ENCODE measurements at regions of chr16 and their contacts with region 1.

Region 1: DNA sequence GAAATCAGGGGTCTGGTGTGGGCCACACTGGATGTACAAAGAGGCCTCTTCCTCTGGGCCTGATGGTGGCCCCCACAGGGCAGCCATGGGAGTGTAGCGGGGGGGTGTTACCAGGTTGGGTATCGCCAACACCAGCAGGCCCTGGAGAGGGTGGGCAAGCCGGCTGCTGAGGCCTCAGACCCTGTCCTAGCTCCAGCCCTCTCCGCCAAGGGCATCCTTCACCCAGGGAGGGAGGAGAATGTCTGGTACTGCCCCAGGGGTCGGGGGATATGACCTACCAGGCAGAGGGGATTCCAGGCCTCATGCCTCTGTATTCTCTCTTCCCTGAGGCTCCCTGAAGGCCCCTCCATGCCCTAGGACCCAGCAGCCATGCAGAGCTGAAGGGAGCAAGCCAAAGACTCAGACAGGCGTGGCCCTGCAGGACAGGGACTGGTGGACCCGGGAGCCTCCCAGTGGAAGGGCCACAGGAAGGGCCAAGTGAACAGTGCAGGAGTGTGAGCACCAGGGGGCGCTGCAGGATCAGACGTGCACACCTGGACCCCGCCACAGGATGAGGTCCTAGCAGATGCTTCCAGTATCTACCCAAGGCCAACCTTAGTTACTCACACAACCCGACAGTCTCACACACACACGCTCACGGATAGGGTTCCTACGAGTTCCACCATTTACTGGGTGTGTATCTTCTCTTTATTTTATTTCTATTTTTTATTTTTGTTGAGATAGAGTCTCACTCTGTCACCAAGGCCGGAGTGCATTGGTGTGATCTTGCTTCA is 10.9 kb upstream of the CES4A start:
- DNase-seq: peak; percentile 97
- H3K4me3 ChIP-seq: no peak overlapping the region
- H3K27ac ChIP-seq: no peak overlapping the region
- H3K4me1 ChIP-seq: peaks cover 0 to 8% (median 2%) of the 10 kb centered on the region in 4 donors
- H3K27me3 ChIP-seq: peaks cover 0 to 15% (median 0%) of the 10 kb centered on the region in 4 donors
- CTCF ChIP-seq: peak in 2 of 3 experiments; percentile 96 to 97
- EP300 ChIP-seq: no peak
- POLR2A ChIP-seq: no peak

Region 2: GRCh38 chr16:67109407-67110135 is 132.0 kb after region 1 on chr16 and contains the start of gene PHAF1:
- intact Hi-C with region 1: loop called (anchors 5 kb)
- DNase-seq: peak; percentile 97
- H3K4me3 ChIP-seq: peak within 1 kb of the TSS; percentile 91 to 96 (median 92)
- H3K27ac ChIP-seq: peak within 1 kb of the TSS; percentile 75 to 86 (median 77)
- H3K4me1 ChIP-seq: peaks cover 13 to 40% (median 31%) of the 10 kb centered on the region in 4 donors
- H3K27me3 ChIP-seq: no peaks in the 10 kb centered on the region
- CTCF ChIP-seq: peak in 1 of 3 experiments; percentile 30
- EP300 ChIP-seq: no peak
- POLR2A ChIP-seq: no peak
- total RNA-seq, gene PHAF1: 11.4 to 23.7 (median 17.1) TPM

Region 3: DNA sequence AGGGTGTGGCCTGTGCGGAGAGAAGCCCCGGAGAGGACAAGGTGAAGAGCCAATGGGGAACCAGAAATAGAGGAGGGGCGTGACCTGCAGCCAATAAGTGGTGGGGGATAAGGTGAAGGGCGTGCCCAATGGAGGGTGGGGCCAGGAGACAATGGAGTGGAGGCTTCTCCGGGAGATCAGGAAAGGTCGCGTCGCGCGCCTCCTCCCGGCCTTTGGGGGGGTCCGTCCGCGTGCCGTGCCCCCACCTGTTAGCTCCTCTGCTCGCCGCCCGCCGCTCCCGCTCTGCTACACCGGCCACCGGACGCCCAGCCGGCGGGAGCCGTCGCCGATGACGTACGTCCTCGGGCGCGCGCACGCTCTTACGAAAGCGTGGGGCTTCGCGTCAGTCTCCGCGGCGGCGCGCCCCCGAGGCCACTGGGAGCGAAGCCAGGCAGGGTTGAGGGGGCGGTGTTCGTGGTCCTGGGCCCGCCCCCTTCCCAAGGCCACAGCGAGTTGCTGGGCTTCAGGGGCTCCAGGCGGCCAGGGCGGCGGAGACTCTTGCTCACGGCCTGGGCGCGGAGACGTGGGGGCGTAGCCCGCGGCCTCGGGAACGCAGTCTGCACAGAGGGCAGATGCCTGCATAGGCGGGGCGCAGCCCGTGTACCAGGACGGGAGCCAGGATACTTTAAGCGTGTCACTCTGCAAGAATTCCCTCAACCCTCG is 206.3 kb after region 1 on chr16 and contains the start of gene MATCAP1:
- intact Hi-C with region 1: loop called (anchors 2 kb)
- DNase-seq: peak; percentile 99
- H3K4me3 ChIP-seq: peak within 1 kb of the TSS; percentile 70 to 92 (median 72)
- H3K27ac ChIP-seq: peak within 1 kb of the TSS; percentile 94 to 95 (median 94)
- H3K4me1 ChIP-seq: peaks cover 26 to 64% (median 56%) of the 10 kb centered on the region in 4 donors
- H3K27me3 ChIP-seq: no peaks in the 10 kb centered on the region
- CTCF ChIP-seq: peak in 1 of 3 experiments; percentile 7
- EP300 ChIP-seq: peak; percentile 78
- POLR2A ChIP-seq: no peak
- total RNA-seq, gene MATCAP1: 7.8 to 17.7 (median 11.2) TPM

Region 4: DNA sequence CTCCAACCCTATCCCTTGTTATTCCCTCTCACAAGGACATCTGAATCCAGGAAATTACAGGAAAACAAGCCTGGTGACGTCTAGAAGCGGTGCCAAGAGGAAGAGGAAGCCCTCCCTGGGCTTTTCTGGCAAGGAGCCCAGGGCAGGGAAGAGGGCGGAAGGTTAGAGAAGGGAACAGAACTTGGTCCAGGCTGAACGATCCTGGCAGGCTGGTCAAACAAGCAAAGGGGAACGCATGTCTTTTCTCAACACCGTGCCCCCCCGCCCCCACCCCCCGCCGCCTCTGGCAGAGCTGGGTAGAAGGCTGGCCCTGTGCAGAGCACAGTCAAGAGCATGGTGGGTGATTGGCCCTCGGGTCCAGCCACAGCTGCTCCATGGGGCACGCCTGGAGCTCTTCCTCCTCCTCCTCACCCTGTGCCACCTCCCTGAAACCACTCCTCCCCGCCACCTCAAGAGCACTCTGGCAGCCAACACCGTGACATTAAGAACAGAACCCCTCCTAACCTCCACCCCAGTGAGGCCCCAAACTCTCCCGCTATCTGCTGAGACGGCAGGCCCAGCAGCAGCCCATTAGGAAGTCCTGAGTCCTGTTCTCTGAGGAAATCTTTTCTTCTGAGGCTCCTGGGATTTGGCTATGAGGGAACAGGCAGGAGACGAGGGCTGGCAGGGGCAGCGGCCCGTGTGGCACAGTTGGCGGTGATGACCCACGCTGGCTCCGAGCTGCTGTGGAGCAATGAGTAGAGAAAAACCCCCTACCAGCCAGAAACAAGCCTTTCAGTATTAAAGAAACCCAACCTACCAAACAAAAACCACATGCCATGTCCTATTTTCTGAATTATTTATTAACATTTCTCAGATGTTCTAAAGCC is 696.4 kb after region 1 on chr16:
- intact Hi-C with region 1: no loop called
- DNase-seq: no peak
- H3K4me3 ChIP-seq: no peak overlapping the region
- H3K27ac ChIP-seq: peak overlapping the region; percentile 44 to 80 (median 64)
- H3K4me1 ChIP-seq: peaks cover 25 to 44% (median 32%) of the 10 kb centered on the region in 4 donors
- H3K27me3 ChIP-seq: no peaks in the 10 kb centered on the region
- CTCF ChIP-seq: no peak
- EP300 ChIP-seq: no peak
- POLR2A ChIP-seq: no peak

Measured in esophagus muscularis mucosa (tissue), 4 donors.